AG04450 (cell line): ENCODE measurements at regions of chr19 and their contacts with region 1.

Region 1: GRCh38 chr19:48391107-48391986 is at the start of gene KDELR1:
- DNase-seq: no peak
- H3K4me3 ChIP-seq: peak within 1 kb of the TSS; percentile 97
- H3K27ac ChIP-seq: peak within 1 kb of the TSS; percentile 91
- H3K27me3 ChIP-seq: peaks cover 29% of the 10 kb centered on the region
- CTCF ChIP-seq: peak; percentile 94
- polyA plus RNA-seq, gene KDELR1: 168 and 187 TPM in 2 replicates

Region 2: DNA sequence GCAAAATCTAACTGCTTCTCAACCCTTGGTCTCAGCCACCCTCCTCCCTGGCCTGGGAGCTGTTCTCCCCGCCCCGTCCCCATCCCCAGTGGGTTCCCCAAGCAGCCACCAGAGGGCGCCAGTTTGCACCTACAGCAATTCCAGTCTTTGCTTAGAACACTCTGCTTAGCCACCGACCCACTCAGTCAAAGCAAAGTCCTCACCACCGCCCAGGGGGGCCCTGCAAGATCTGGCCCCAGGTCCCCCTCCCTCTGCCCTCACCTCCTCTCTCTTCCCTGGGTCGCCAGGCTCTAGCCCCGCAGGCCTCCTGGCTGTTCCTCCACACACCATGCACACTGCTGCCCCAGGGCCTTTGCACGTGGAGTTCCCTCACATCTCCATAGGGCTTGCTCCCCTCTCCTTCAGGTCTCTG is 40.0 kb before region 1 on chr19:
- CTCF ChIA-PET with region 1: interaction called, 11 read pairs
- POLR2A ChIA-PET with region 1: no interaction called
- DNase-seq: no peak
- H3K4me3 ChIP-seq: no peak overlapping the region
- H3K27ac ChIP-seq: no peak overlapping the region
- H3K27me3 ChIP-seq: no peaks in the 10 kb centered on the region
- CTCF ChIP-seq: peak; percentile 69

Region 3: GRCh38 chr19:48363810-48364563 is 27.4 kb before region 1 on chr19 and contains the starts of genes SYNGR4 and TMEM143:
- CTCF ChIA-PET with region 1: interaction called, 22 read pairs
- POLR2A ChIA-PET with region 1: interaction called, 24 read pairs
- DNase-seq: peak; percentile 99
- H3K4me3 ChIP-seq: peak within 1 kb of the TSS; percentile 72
- H3K27ac ChIP-seq: peak within 1 kb of the TSS; percentile 85
- H3K27me3 ChIP-seq: no peaks in the 10 kb centered on the region
- CTCF ChIP-seq: no peak
- polyA plus RNA-seq, gene SYNGR4: not detected in 2 replicates
- polyA plus RNA-seq, gene TMEM143: 4.7 and 5.1 TPM in 2 replicates

Region 4: GRCh38 chr19:48403606-48404005 is 12.3 kb after region 1 on chr19:
- CTCF ChIA-PET with region 1: interaction called, 42 read pairs
- POLR2A ChIA-PET with region 1: interaction called, 9 read pairs
- DNase-seq: no peak
- H3K4me3 ChIP-seq: no peak overlapping the region
- H3K27ac ChIP-seq: no peak overlapping the region
- H3K27me3 ChIP-seq: no peaks in the 10 kb centered on the region
- CTCF ChIP-seq: no peak

Region 5: DNA sequence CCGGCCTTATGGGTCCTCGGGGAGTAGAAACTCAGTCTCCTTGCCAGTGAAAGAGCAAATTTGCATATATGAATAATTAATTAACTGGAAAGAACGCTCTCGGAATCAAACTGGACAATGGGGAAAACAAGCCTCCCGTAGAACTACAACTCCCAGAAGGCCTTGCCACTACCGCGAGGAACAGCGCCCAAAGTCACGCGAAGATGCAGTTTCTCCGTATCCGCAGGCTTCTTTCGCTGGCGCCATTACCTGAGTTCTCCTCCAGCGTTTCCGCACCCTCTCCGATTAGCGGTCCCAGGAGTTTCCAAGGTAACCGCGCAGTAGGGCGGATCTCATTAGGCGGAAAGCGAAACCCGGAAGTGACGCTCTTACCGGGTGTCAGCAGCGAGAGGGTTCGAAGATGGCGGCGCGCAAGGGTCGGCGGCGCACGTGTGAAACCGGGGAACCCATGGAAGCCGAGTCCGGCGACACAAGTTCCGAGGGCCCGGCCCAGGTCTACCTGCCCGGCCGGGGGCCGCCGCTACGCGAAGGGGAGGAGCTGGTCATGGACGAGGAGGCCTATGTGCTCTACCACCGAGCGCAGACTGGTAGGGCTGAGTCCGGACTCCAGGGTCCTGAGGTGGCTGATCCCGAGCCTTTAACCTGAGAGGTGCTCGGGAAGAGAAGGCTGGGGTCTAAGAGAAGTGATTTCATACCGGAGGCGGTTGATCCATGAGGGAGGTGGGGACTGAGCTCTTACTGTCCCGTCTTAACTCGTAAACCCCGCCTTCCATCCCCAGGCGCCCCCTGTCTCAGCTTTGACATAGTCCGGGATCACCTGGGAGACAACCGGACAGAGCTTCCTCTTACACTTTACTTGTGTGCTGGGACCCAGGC is 54.5 kb after region 1 on chr19 and contains the start of gene GRWD1:
- CTCF ChIA-PET with region 1: interaction called, 12 read pairs
- POLR2A ChIA-PET with region 1: interaction called, 3 read pairs
- DNase-seq: peak; percentile 81
- H3K4me3 ChIP-seq: peak within 1 kb of the TSS; percentile 96
- H3K27ac ChIP-seq: peak within 1 kb of the TSS; percentile 92
- H3K27me3 ChIP-seq: peaks cover 9% of the 10 kb centered on the region
- CTCF ChIP-seq: 0 out of 2 replicates have a peak, but pooled peaks have one; percentile 6
- polyA plus RNA-seq, gene GRWD1: 15.2 and 16.0 TPM in 2 replicates